H1 (cell line): ENCODE measurements at regions of chr1 and their contacts with region 1.

Region 1: GRCh38 chr1:203148125-203148524 is 20.6 kb downstream of the ADORA1 start:
- DNase-seq: no peak
- H3K4me3 ChIP-seq: no peak overlapping the region
- H3K27ac ChIP-seq: no peak overlapping the region
- H3K4me1 ChIP-seq: peaks cover 7 to 43% (median 19%) of the 10 kb centered on the region in 4 experiments
- H3K27me3 ChIP-seq: no peaks in the 10 kb centered on the region
- CTCF ChIP-seq: peak; percentile 35 to 63 (median 52); a peak in 3 of 4 replicates
- EP300 ChIP-seq: no peak
- POLR2A ChIP-seq: no peak
- RAD21 ChIP-seq: no peak; a peak in 1 of 4 replicates

Region 2: GRCh38 chr1:203091761-203092330 is 56.3 kb before region 1 on chr1:
- CTCF ChIA-PET with region 1: no interaction called
- POLR2A ChIA-PET with region 1: no interaction called
- DNase-seq: no peak
- H3K4me3 ChIP-seq: no peak overlapping the region
- H3K27ac ChIP-seq: no peak overlapping the region
- H3K4me1 ChIP-seq: peaks cover 0 to 3% (median 0%) of the 10 kb centered on the region in 4 experiments; a peak in 1 of 7 replicates
- H3K27me3 ChIP-seq: 0 out of 7 replicates have a peak, but pooled peaks cover 0 to 2% (median 0%) of the 10 kb centered on the region in 4 experiments
- CTCF ChIP-seq: no peak
- EP300 ChIP-seq: no peak
- POLR2A ChIP-seq: no peak
- RAD21 ChIP-seq: no peak

Region 3: DNA sequence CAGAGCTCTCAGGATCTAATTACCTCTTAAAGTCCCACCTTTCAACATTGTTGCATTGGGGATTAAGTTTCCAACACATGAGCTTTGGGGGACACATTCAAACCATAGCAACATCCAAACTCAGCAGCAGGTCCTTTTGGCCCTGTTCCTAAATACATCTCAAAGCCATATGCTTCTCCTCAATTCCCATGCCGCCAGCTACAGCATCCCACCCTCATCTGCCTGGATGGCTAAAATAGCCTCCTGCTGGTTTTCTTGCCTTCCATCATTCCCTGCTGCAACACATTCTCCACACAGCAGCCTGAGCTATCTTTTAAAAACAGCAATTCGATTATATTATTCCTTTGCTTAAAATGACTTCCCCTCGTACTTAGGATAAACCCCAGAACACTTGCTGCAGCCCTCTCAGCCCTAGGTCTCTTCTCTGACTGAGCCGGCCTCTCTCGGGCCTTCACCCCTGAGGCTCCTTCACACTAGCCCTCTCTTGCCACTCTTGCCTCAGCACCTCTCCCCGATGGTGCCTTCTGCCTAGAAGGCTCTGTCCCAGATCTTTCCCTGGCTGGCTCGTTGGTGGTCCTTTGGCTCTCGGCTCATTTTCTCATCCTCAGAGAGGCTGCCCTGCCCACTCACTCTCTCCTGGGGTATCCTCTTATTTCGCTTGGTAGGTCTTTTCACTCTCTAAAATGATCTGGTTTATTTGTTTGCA is 11.0 kb after region 1 on chr1:
- CTCF ChIA-PET with region 1: interaction called, 15 read pairs
- POLR2A ChIA-PET with region 1: interaction called, 3 read pairs
- DNase-seq: no peak
- H3K4me3 ChIP-seq: no peak overlapping the region
- H3K27ac ChIP-seq: no peak overlapping the region
- H3K4me1 ChIP-seq: peaks cover 0 to 6% (median 2%) of the 10 kb centered on the region in 4 experiments; a peak in 3 of 7 replicates
- H3K27me3 ChIP-seq: no peaks in the 10 kb centered on the region; a peak in 1 of 7 replicates
- CTCF ChIP-seq: no peak
- EP300 ChIP-seq: no peak
- POLR2A ChIP-seq: no peak
- RAD21 ChIP-seq: no peak

Region 4: DNA sequence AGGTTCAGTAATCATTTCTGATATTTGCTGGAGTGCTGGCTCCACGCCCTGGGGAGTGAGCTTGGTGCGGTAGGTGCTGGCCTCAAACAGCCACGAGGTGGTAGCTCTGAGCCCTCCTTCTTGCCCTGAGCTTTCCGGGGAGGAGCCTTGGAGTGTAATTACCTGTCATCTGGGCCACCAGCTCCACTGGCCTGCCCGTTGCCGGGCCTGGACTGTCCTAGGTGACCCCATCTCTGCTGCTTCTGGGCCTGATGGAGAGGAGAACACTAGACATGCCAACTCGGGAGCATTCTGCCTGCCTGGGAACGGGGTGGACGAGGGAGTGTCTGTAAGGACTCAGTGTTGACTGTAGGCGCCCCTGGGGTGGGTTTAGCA is 18.4 kb after region 1 on chr1:
- CTCF ChIA-PET with region 1: interaction called, 140 read pairs
- POLR2A ChIA-PET with region 1: interaction called, 3 read pairs
- DNase-seq: no peak
- H3K4me3 ChIP-seq: no peak overlapping the region
- H3K27ac ChIP-seq: no peak overlapping the region
- H3K4me1 ChIP-seq: no peaks in the 10 kb centered on the region; a peak in 1 of 7 replicates
- H3K27me3 ChIP-seq: no peaks in the 10 kb centered on the region
- CTCF ChIP-seq: peak; percentile 15 to 32 (median 17); a peak in 2 of 4 replicates
- EP300 ChIP-seq: no peak
- POLR2A ChIP-seq: no peak
- RAD21 ChIP-seq: peak; percentile 5 to 23; a peak in 1 of 4 replicates

Region 5: GRCh38 chr1:203239526-203240305 is 91.6 kb after region 1 on chr1:
- CTCF ChIA-PET with region 1: no interaction called
- POLR2A ChIA-PET with region 1: no interaction called
- DNase-seq: no peak
- H3K4me3 ChIP-seq: no peak overlapping the region
- H3K27ac ChIP-seq: no peak overlapping the region
- H3K4me1 ChIP-seq: no peaks in the 10 kb centered on the region
- H3K27me3 ChIP-seq: no peaks in the 10 kb centered on the region
- CTCF ChIP-seq: no peak
- EP300 ChIP-seq: no peak
- POLR2A ChIP-seq: no peak
- RAD21 ChIP-seq: no peak